HepG2 (cell line): ENCODE measurements at regions of chr17 and their contacts with region 1.

Region 1: DNA sequence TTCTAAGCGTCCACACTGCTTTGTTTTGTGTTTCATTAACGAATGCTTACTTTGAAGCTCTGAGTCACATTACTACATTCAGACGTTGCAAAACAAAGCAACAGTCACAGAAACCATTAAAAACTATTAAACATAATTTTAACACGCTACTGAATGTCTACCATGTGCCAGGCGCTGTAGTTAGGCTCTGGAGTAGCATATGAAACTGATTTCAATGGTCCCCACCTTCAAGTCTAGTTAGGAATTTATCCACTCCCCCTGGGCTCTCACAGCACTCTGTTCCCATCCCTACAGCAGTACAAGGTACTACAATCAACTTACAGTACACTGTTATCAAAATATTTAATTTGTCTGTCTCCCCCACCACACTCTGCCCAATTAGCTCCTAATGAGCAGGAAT is 631 bp downstream of the UTP6 start:
- DNase-seq: peak; percentile 16
- ATAC-seq: peak; percentile 43
- H3K4me3 ChIP-seq: peak overlapping the region; percentile 89 to 97 (median 91)
- H3K27ac ChIP-seq: peak overlapping the region; percentile 73
- H3K4me1 ChIP-seq: peaks cover 11% of the 10 kb centered on the region
- H3K27me3 ChIP-seq: no peaks in the 10 kb centered on the region; a peak in 1 of 5 replicates
- CTCF ChIP-seq: no peak
- EP300 ChIP-seq: no peak
- POLR2A ChIP-seq: no peak
- RAD21 ChIP-seq: no peak

Region 2: DNA sequence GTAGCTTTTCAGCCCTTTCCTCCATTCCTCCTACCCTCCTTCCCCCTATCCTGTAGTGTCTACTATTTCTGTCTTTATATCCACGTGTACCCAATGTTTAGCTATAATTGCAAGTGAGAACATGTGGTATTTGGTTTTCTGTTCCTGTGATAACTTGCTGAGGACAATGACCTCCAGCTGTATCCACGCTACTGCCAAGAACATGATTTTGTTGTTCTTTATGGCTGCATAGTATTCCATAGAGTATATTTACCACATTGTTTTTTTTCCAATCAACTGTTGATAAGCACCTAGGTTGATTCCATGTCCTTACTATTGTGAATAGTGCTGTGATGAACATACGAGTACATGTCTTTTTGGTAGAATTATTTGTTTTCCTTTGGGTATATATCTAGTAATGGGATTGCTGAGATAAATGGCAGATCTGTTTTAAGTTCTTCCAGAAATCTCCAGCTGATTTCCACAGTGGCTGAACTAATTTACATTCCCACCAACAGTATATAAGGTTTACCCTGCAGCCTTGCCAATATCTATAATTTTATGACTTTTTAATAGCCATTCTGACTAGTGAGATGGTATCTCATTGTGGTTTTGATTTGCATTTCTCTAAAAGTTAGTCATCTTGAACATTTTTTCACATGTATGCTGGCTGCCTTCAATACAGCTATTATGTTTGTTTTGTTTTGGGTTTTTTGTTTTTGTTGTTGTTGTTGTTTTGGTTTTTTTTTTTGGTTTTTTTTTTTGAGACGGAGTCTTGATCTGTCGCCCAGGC is 30.9 kb before region 1 on chr17:
- CTCF ChIA-PET with region 1: no interaction called
- POLR2A ChIA-PET with region 1: interaction called, 3 read pairs
- in situ Hi-C with region 1: no loop called
- intact Hi-C with region 1: loop called (anchors 1 kb)
- DNase-seq: no peak
- ATAC-seq: no peak
- H3K4me3 ChIP-seq: no peak overlapping the region
- H3K27ac ChIP-seq: no peak overlapping the region
- H3K4me1 ChIP-seq: no peaks in the 10 kb centered on the region
- H3K27me3 ChIP-seq: no peaks in the 10 kb centered on the region
- CTCF ChIP-seq: no peak
- EP300 ChIP-seq: no peak
- POLR2A ChIP-seq: no peak
- RAD21 ChIP-seq: no peak

Region 3: GRCh38 chr17:31935512-31935911 is 34.6 kb after region 1 on chr17:
- CTCF ChIA-PET with region 1: no interaction called
- POLR2A ChIA-PET with region 1: interaction called, 5 read pairs
- in situ Hi-C with region 1: no loop called
- intact Hi-C with region 1: loop called (anchors 5 kb)
- DNase-seq: no peak
- ATAC-seq: no peak
- H3K4me3 ChIP-seq: no peak overlapping the region
- H3K27ac ChIP-seq: no peak overlapping the region
- H3K4me1 ChIP-seq: peaks cover 31% of the 10 kb centered on the region
- H3K27me3 ChIP-seq: no peaks in the 10 kb centered on the region
- CTCF ChIP-seq: no peak
- EP300 ChIP-seq: no peak
- POLR2A ChIP-seq: no peak
- RAD21 ChIP-seq: no peak